Aorta (tissue), 5 donors: ENCODE measurements at regions of chr15 and their contacts with region 1.

Region 1: GRCh38 chr15:34367101-34368081 is at the start of gene LPCAT4:
- DNase-seq: peak; percentile 93 to 96
- ATAC-seq: peak; percentile 95
- H3K4me3 ChIP-seq: peak within 1 kb of the TSS; percentile 72 to 86
- H3K27ac ChIP-seq: peak within 1 kb of the TSS; percentile 34 to 92
- H3K4me1 ChIP-seq: no peaks in the 10 kb centered on the region
- H3K27me3 ChIP-seq: no peaks in the 10 kb centered on the region
- total RNA-seq, gene LPCAT4: 32.1 to 78.6 TPM

Region 2: DNA sequence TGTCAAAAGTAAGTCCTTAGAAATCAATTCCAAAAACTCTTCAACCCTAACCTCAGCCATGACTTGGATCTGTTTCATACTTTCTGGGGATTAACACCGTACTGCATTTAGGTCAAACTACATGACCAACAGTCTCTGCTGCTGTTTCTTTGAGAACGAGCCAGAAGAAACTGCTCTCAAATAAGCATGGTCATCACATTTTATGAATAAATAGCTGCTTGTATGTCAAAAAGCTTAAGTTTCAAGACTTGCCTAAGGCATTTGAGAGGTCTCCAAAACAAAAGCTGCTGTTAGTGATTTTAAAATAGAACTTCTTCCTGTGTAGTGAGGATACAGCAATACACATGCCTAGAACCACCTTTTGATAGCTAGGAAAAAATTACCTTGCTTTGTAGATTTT is 565.4 kb before region 1 on chr15:
- intact Hi-C with region 1: no loop called
- DNase-seq: no peak
- ATAC-seq: no peak
- H3K4me3 ChIP-seq: no peak overlapping the region
- H3K27ac ChIP-seq: no peak overlapping the region
- H3K4me1 ChIP-seq: no peaks in the 10 kb centered on the region
- H3K27me3 ChIP-seq: no peaks in the 10 kb centered on the region

Region 3: GRCh38 chr15:34055853-34056595 is 311.4 kb before region 1 on chr15:
- intact Hi-C with region 1: loop called in 1 of 2 experiments (anchors 5 kb)
- DNase-seq: no peak
- ATAC-seq: peak; percentile 69
- H3K4me3 ChIP-seq: no peak overlapping the region
- H3K27ac ChIP-seq: peak overlapping the region; percentile 93 to 96
- H3K4me1 ChIP-seq: peaks cover 0 to 3% of the 10 kb centered on the region in 2 donors
- H3K27me3 ChIP-seq: no peaks in the 10 kb centered on the region

Region 4: DNA sequence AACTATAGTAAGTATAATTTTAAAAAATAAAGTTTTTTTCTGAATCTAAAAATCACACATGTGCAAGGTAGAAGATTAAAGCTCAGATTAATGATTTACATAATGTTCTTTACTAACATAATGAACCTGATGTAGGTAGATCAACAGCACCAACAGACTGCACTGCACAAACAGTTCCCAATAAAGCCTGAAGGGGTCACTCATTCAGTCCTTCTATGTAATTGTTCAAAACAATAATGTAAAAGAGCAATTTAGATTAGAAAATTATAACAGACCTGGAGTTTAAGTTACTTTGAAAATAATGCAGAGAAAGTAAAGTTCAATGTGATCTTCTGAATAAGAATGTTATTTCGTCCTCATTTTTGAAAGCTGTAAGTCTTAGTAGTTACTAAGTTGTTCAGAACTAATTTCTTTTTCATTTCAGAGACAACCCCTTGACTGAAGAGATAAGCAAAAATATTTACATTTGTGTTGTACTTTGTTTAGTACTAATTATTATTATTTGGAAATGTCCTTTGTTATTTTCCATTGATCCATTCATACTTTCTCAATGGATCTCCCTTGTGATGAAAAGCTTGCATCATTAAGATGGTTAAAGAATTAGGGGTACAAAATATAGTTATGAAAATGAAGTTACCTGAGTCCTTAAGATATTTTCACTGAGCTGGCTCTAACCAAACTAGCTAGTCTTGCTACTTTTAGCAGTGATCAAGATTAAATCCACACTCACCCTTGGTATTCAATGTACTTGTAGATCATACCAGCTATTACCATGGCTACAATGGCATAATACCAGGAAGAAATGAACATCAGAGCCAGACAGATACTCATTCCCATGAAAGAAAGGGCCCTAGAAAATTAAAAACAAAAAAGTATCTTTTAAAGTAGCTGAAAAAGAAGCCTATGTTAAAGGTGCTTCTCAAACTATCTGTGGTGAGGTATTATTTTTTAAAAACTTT is 125.7 kb before region 1 on chr15:
- intact Hi-C with region 1: loop called (anchors 2 to 5 kb)
- DNase-seq: no peak
- ATAC-seq: no peak
- H3K4me3 ChIP-seq: no peak overlapping the region
- H3K27ac ChIP-seq: no peak overlapping the region
- H3K4me1 ChIP-seq: no peaks in the 10 kb centered on the region
- H3K27me3 ChIP-seq: no peaks in the 10 kb centered on the region

Region 5: DNA sequence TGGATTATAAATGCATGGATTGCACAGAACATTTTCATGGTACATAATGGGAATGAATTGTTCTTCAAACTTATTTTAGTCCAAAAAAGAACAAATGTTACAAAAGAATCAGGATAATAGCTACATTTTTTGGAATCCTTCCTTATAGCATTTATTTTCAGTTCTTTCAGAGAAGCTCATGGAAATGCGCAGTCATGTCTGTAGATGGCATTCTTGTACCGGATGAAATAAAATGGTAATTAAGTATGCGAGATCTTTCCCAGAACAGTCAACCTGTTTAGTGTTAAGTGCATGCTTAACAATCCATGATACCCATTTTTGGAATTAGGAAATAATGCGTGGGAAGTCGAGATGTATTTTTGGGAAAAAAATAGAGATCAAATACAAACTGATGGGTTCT is 254.3 kb after region 1 on chr15:
- intact Hi-C with region 1: no loop called
- DNase-seq: no peak
- ATAC-seq: no peak
- H3K4me3 ChIP-seq: no peak overlapping the region
- H3K27ac ChIP-seq: no peak overlapping the region
- H3K4me1 ChIP-seq: no peaks in the 10 kb centered on the region
- H3K27me3 ChIP-seq: no peaks in the 10 kb centered on the region